Mammary epithelial cell (primary cell): ENCODE measurements at regions of chr2 and their contacts with region 1.

Region 1: DNA sequence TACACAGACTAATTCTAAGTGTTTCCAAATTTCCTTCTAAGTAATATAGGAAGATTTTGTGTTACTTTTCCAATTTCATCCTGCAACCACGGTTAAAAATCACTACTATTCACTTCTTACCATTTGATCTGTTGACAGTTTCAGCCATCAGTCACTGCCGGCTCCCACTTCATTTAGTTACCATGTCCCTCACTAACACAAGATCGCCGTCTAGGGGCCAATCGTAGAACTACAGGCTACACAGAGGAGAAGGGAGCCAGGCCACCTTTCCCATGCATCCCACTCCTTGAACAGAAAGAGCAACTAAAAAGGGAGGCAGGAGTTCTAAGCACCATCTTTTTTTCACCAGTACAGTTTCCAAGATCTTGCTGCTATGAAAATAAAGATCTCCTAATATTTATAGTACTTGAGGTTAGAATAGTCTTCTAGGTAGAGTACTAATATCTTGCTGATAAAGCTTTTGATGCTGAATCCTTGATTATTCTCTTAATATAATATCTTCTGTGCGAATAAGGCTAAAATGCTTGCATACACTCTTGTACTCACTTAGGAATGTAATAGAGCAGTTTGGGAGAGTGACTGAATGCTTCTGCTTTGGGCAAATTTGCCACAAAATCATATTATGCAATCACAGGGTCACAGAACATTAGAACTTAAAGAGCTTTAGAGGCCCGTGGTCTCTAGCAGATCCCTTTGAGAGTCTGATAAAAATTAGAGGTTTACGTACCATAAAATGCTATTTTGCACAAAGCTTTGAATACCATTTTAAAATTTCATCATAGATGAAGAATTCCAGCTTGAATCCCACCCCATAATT is 39.5 kb upstream of the CYP1B1 start:
- DNase-seq: peak; percentile 70
- H3K4me3 ChIP-seq: no peak overlapping the region
- H3K27ac ChIP-seq: peak overlapping the region; percentile 29
- H3K4me1 ChIP-seq: peaks cover 25% of the 10 kb centered on the region
- H3K27me3 ChIP-seq: no peaks in the 10 kb centered on the region
- CTCF ChIP-seq: peak; percentile 100

Region 2: DNA sequence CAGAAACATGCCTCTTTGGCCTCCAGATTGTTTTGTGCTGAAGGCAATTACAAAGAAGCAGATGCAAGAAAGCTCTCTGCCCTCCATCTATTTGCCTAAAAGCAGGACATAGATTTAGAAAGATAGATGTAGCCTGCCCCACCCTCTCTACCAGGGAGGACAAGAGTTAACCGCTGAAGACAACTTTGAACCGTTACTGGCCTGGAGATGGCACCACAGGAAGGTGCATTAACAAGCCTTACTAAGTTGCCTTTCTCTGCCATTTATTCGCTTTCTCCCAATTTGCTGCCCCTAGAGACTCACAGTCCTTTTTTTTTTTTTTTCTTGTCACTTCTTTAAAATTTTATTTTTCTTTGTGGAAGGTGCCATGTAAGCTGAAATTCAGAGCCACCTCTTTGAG is 219.1 kb before region 1 on chr2:
- CTCF ChIA-PET with region 1: no interaction called
- dilution Hi-C with region 1: no loop called
- in situ Hi-C with region 1: no loop called
- intact Hi-C with region 1: loop called (anchors 2 kb)
- DNase-seq: no peak
- H3K4me3 ChIP-seq: no peak overlapping the region
- H3K27ac ChIP-seq: no peak overlapping the region
- H3K4me1 ChIP-seq: peaks cover 16% of the 10 kb centered on the region
- H3K27me3 ChIP-seq: no peaks in the 10 kb centered on the region
- CTCF ChIP-seq: no peak

Region 3: DNA sequence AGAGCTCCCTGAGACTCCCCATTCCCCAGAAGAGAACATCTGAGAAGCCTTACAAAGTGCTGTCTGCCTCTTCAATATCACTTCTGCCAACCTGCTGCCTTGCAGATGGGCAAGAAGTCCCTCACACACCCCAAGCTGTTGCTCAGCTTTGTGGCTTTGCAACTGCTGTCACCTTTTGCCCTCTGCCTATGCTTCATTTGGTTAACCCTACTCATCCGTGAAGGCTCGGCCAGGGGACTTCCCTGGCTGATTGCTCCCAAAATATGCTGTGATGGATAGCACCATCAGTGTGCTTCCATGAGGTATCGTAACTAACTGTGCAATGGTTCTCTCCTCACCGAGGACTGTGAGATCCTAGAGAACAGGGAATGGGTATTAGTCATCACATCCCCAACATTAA is 49.5 kb after region 1 on chr2:
- CTCF ChIA-PET with region 1: no interaction called
- dilution Hi-C with region 1: no loop called
- in situ Hi-C with region 1: no loop called
- intact Hi-C with region 1: loop called (anchors 2 kb)
- DNase-seq: no peak
- H3K4me3 ChIP-seq: no peak overlapping the region
- H3K27ac ChIP-seq: no peak overlapping the region
- H3K4me1 ChIP-seq: peaks cover 19% of the 10 kb centered on the region
- H3K27me3 ChIP-seq: no peaks in the 10 kb centered on the region
- CTCF ChIP-seq: no peak

Region 4: GRCh38 chr2:38185012-38185491 is 69.6 kb after region 1 on chr2:
- CTCF ChIA-PET with region 1: no interaction called
- dilution Hi-C with region 1: no loop called
- in situ Hi-C with region 1: no loop called
- intact Hi-C with region 1: no loop called
- DNase-seq: peak; percentile 31
- H3K4me3 ChIP-seq: no peak overlapping the region
- H3K27ac ChIP-seq: no peak overlapping the region
- H3K4me1 ChIP-seq: peaks cover 11% of the 10 kb centered on the region
- H3K27me3 ChIP-seq: no peaks in the 10 kb centered on the region
- CTCF ChIP-seq: no peak

Region 5: DNA sequence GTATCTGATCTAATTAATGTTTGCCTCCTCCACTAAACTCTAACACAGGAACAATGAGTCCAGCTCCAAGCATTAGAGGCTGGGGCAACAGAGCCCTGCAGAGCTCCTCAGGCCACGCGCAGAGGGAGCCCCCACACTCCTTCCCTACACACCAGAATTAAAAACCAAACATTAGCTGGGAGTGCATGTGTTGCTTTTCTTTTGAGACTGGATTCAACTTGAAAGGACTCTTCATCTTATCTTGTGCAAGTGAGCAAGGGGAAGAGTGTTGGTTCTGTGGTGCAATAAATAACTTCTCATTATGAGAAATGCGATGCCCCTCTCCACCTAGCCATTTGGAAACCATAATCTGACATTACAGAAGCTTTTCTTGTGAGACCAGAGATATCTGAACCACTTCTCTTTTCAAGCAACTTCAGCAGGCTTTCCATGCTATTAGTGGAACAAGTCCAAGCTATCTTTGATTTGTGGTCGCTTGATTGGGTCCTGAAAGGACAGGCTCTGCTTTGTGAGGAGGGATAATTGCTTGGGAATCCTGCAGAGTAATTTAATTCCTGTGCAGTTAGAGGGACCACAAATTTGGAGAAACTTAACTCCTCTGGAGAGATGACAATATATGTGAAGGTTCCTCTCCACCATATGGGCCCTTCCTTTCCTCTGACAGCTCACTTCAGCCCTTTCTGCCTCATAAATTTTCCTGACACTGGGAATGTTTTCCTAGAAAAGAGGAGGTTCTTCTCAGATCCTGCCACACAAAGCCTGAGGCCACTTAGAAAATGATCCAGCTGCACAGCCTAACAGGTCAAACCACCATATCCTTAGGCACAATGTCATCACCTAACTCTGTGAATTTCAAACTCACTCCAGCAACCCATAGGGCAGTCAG is 149.2 kb after region 1 on chr2:
- CTCF ChIA-PET with region 1: no interaction called
- dilution Hi-C with region 1: no loop called
- in situ Hi-C with region 1: loop called in 1 of 2 experiments (anchors 10 kb)
- intact Hi-C with region 1: no loop called
- DNase-seq: no peak
- H3K4me3 ChIP-seq: no peak overlapping the region
- H3K27ac ChIP-seq: no peak overlapping the region
- H3K4me1 ChIP-seq: no peaks in the 10 kb centered on the region
- H3K27me3 ChIP-seq: no peaks in the 10 kb centered on the region
- CTCF ChIP-seq: no peak

Region 6: DNA sequence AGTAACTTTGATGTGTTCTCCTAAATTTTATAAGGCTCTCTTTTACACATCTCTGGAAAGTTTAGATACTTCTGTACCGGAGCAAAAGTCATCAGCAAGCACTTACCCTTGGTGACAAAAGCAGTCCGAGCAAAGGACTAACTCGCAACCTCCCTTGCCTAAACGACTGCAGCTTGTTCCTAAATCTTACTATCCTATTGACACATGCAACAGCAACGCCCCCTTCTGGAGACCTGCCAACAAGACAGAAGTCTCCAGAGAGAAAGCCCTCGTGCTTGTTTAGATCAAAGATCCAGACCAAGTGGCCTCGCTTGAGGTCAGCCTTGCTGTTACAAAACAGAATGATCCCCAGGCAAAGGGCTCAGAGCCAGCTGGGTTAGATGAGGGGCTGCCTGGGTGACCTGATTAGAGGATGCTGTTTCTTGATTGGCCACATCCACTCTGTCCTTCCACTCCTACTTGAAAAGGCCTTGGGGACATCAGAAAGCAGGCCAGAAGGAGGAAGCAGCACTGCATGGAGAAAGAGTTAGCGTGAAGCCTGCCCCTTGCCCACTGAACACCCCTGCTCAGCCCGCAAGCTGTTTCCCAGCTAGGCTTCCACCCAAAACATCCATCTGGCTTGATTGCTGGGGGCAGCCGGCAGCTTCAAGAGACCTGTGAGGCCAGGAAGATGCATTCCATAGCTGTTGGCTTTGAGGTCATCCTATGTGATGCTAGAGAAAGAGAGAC is 393.1 kb after region 1 on chr2:
- CTCF ChIA-PET with region 1: no interaction called
- dilution Hi-C with region 1: no loop called
- in situ Hi-C with region 1: no loop called
- intact Hi-C with region 1: loop called (anchors 5 kb)
- DNase-seq: peak; percentile 70
- H3K4me3 ChIP-seq: no peak overlapping the region
- H3K27ac ChIP-seq: no peak overlapping the region
- H3K4me1 ChIP-seq: peaks cover 24% of the 10 kb centered on the region
- H3K27me3 ChIP-seq: no peaks in the 10 kb centered on the region
- CTCF ChIP-seq: peak; percentile 68 to 75